Activated B cell treated with CpG ODN at 0.5 μM for 24 hours (primary cell): ENCODE measurements at regions of chr9 and their contacts with region 1.

Region 1: DNA sequence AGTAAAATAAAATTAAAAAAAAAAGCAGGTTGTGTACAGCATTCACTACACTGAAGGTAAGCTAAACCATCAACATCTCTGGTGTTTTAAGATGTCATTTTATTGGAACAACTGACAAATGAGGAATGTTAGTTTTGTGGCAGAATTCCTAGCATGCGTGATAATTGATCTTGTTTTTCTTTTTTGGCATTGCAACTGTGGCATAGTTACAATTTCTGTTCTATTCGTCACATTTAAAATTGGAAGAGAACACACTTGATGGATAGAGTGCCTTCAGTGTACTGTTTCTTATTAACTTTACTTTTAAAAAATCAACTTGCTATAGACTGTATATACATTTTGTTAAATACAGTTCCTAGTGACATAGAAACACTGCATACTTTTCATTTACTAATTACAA is 43.6 kb upstream of the TNFSF15 start:
- DNase-seq: no peak
- ATAC-seq: no peak
- H3K4me3 Mint-ChIP-seq: no peak overlapping the region
- H3K27ac Mint-ChIP-seq: no peak overlapping the region
- H3K4me1 Mint-ChIP-seq: no peaks in the 10 kb centered on the region
- H3K27me3 Mint-ChIP-seq: peaks cover 3% of the 10 kb centered on the region
- CTCF ChIP-seq: no peak

Region 2: DNA sequence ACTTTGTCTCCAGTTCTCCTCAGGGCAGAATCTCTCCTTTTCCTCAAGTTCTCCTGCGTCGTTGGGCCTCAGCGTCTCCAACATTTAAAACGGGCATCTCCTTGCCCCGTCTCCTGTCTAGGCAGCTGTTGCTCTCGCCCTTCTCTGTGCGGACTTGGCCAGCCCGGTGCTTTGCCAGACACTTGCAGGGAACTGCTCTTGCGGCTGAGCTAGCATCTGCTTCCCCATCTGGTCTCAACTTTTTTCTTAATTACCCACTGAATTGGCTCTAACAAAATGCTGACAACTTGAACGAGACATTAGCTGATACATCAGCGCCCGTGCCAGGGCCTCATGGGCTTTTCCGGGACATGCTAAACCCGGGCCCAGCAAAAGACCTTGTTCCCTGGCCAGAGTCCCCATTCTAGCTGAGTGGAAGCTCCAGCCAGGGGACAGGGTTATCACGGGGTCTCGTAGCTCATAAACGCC is 948.2 kb before region 1 on chr9:
- CTCF ChIA-PET with region 1: no interaction called
- POLR2A ChIA-PET with region 1: no interaction called
- intact Hi-C with region 1: no loop called
- DNase-seq: no peak
- ATAC-seq: no peak
- H3K4me3 Mint-ChIP-seq: no peak overlapping the region
- H3K27ac Mint-ChIP-seq: no peak overlapping the region
- H3K4me1 Mint-ChIP-seq: peaks cover 12% of the 10 kb centered on the region
- H3K27me3 Mint-ChIP-seq: peaks cover 2% of the 10 kb centered on the region
- CTCF ChIP-seq: no peak

Region 3: GRCh38 chr9:114805670-114806525 is 43.6 kb before region 1 on chr9 and contains the start of gene TNFSF15:
- CTCF ChIA-PET with region 1: no interaction called
- POLR2A ChIA-PET with region 1: no interaction called
- intact Hi-C with region 1: loop called (anchors 5 kb)
- DNase-seq: no peak
- ATAC-seq: peak; percentile 85
- H3K4me3 Mint-ChIP-seq: peak within 1 kb of the TSS; percentile 66
- H3K27ac Mint-ChIP-seq: peak within 1 kb of the TSS; percentile 19
- H3K4me1 Mint-ChIP-seq: peaks cover 40% of the 10 kb centered on the region
- H3K27me3 Mint-ChIP-seq: peaks cover 2% of the 10 kb centered on the region
- CTCF ChIP-seq: no peak
- total RNA-seq, gene TNFSF15: 0.10 and 0.22 TPM in 2 replicates

Region 4: GRCh38 chr9:115393976-115394775 is 544.7 kb after region 1 on chr9:
- CTCF ChIA-PET with region 1: no interaction called
- POLR2A ChIA-PET with region 1: no interaction called
- intact Hi-C with region 1: no loop called
- DNase-seq: no peak
- ATAC-seq: no peak
- H3K4me3 Mint-ChIP-seq: no peak overlapping the region
- H3K27ac Mint-ChIP-seq: no peak overlapping the region
- H3K4me1 Mint-ChIP-seq: no peaks in the 10 kb centered on the region
- H3K27me3 Mint-ChIP-seq: no peaks in the 10 kb centered on the region
- CTCF ChIP-seq: no peak